ENCODE measurements at regions of chr19 and their contacts with region 1.

Region 1: DNA sequence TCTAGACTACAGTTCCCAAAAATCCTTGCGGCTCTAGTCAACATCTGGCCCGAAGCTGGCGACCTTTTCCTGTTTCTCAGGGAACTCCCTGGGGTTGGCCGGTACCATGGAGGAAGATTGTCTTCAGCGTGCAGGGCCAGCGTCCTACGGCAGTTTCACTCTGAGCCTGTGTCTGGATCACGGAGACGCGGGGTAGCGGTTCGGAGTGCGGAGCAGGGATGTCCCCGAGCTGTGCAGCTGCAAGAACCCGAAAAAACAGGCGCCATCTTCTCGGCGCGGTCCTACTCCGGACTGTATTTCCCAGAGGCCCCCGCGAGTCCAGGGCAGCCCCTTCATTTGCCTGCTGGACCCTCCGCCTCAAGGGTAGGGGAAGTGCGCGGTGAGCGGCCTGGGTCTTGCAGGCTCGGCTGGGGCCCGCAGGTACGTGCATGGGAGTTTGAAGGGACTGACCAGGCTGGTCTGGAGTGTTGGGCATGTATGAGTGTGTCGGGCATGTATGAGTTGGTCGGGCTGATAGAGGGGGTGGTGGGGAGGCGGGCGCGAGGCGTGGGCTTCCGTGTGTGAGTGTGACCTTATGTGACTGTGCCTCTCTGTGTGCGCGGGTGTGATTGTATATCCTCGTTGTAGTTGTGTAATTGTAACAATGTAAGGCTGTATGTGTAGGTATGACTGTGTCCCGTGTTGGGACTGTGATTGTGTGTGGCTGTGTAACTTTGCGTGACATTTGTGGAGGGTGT is at the start of gene ZNF383:
- DNase-seq: peak; percentile 63 to 81 (median 78)
- ATAC-seq: peak; percentile 95
- H3K4me3 ChIP-seq: peak within 1 kb of the TSS; percentile 93
- H3K4me3 Mint-ChIP-seq: peak within 1 kb of the TSS; percentile 90 to 97 (median 92)
- H3K27ac ChIP-seq: peak within 1 kb of the TSS; percentile 94
- H3K27ac Mint-ChIP-seq: peak within 1 kb of the TSS; percentile 74 to 99 (median 91)
- H3K4me1 ChIP-seq: peaks cover 0 to 6% of the 10 kb centered on the region in 2 donors
- H3K4me1 Mint-ChIP-seq: peaks cover 21 to 33% (median 31%) of the 10 kb centered on the region in 7 donors
- H3K27me3 ChIP-seq: no peaks in the 10 kb centered on the region
- H3K27me3 Mint-ChIP-seq: no peaks in the 10 kb centered on the region
- total RNA-seq, gene ZNF383: 12.2 to 33.4 (median 21.2) TPM

Region 2: GRCh38 chr19:36378625-36379509 is 839.2 kb before region 1 on chr19 and contains the start of gene ZFP14:
- CTCF ChIA-PET with region 1: no interaction called
- POLR2A ChIA-PET with region 1: interaction called, 4 read pairs
- intact Hi-C with region 1: loop called in 1 of 2 experiments (anchors 5 kb)
- DNase-seq: peak; percentile 86 to 95 (median 93)
- ATAC-seq: peak; percentile 99
- H3K4me3 ChIP-seq: peak within 1 kb of the TSS; percentile 86
- H3K4me3 Mint-ChIP-seq: peak within 1 kb of the TSS; percentile 82 to 98 (median 94)
- H3K27ac ChIP-seq: peak within 1 kb of the TSS; percentile 86
- H3K27ac Mint-ChIP-seq: peak within 1 kb of the TSS; percentile 55 to 98 (median 94)
- H3K4me1 ChIP-seq: peaks cover 0 to 10% of the 10 kb centered on the region in 2 donors
- H3K4me1 Mint-ChIP-seq: peaks cover 9 to 23% (median 21%) of the 10 kb centered on the region in 7 donors
- H3K27me3 ChIP-seq: no peaks in the 10 kb centered on the region
- H3K27me3 Mint-ChIP-seq: no peaks in the 10 kb centered on the region
- total RNA-seq, gene ZFP14: 5.3 to 24.0 (median 9.2) TPM

Region 3: DNA sequence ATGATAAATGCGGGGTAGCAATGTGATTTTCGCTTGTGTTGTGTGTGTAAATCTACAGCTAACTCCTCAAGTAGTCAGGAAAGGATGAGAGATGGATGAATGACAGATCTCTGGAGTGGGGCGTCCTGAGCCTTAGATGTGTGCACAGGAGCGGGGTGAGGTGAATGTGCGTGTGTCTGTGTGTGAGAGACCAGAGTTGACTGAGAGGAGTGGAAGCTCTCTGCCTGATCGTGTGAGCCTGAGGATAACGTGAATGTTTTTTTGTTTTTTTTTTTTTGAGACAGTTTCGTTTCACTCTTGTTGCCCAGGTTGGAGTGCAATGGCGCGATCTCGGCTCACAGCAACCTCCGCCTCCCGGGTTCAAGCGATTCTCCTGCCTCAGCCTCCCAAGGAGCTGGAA is 552.2 kb before region 1 on chr19:
- CTCF ChIA-PET with region 1: no interaction called
- POLR2A ChIA-PET with region 1: no interaction called
- intact Hi-C with region 1: loop called in 1 of 2 experiments (anchors 5 kb)
- DNase-seq: peak in 1 of 9 donors; percentile 2
- ATAC-seq: no peak
- H3K4me3 ChIP-seq: peak overlapping the region; percentile 88
- H3K4me3 Mint-ChIP-seq: peak overlapping the region; percentile 91 to 100 (median 98)
- H3K27ac ChIP-seq: no peak overlapping the region
- H3K27ac Mint-ChIP-seq: peak overlapping the region; percentile 29 to 99 (median 93)
- H3K4me1 ChIP-seq: peaks cover 0 to 10% of the 10 kb centered on the region in 2 donors
- H3K4me1 Mint-ChIP-seq: peaks cover 17 to 42% (median 35%) of the 10 kb centered on the region in 7 donors
- H3K27me3 ChIP-seq: no peaks in the 10 kb centered on the region
- H3K27me3 Mint-ChIP-seq: no peaks in the 10 kb centered on the region

Region 4: DNA sequence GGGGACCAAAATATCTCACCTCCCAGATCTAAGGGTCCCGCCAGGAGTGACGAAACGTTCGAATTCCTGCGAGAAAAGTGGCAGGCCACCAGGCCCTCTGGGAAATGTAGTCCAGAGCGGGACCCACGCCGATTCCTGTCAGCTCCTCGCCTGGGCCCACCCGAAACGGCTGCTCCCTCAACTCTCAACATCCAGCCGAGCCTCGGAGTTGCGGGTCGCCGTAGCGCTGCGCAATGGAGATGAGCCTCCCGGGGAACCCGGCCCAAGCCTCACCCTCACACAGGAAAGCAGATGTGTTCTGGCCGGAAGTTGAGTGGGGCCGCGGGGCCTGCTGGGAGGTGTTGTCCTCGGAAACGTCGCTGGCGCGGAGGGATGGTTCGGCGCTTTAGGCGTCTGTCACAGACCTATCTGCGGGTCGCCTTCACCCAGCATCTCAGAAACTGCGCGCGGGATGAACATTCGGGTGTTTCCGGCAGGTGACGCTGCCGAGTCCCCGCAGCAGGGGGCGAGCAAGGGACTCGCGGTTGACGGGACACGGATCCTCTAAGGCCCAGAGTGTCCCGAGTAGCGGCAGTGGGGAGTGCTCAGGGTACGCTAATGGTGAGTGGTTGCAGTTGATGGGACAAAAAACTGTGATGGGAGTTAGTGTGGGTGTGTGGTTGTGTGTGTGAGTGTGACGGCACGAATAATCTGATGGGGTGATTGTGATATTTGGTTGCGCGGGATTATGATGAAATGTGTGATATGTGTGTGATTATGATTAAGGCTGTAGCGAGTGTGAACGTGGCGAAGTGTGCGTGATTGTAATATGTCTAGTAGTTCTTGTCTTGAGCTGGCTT is 301.8 kb before region 1 on chr19 and contains the starts of genes ZNF568 and ZNF829:
- CTCF ChIA-PET with region 1: no interaction called
- POLR2A ChIA-PET with region 1: interaction called, 4 read pairs
- intact Hi-C with region 1: loop called (anchors 1 kb)
- DNase-seq: peak; percentile 78 to 96 (median 93)
- ATAC-seq: peak; percentile 97
- H3K4me3 ChIP-seq: peak within 1 kb of the TSS; percentile 95
- H3K4me3 Mint-ChIP-seq: peak within 1 kb of the TSS; percentile 87 to 99 (median 95)
- H3K27ac ChIP-seq: peak within 1 kb of the TSS; percentile 94
- H3K27ac Mint-ChIP-seq: peak within 1 kb of the TSS; percentile 90 to 97 (median 94)
- H3K4me1 ChIP-seq: peaks cover 8 to 13% of the 10 kb centered on the region in 2 donors
- H3K4me1 Mint-ChIP-seq: peaks cover 19 to 46% (median 29%) of the 10 kb centered on the region in 7 donors
- H3K27me3 ChIP-seq: no peaks in the 10 kb centered on the region
- H3K27me3 Mint-ChIP-seq: no peaks in the 10 kb centered on the region
- total RNA-seq, gene ZNF568: 8.2 to 18.0 (median 9.3) TPM
- total RNA-seq, gene ZNF829: 2.6 to 9.0 (median 6.3) TPM

Region 5: DNA sequence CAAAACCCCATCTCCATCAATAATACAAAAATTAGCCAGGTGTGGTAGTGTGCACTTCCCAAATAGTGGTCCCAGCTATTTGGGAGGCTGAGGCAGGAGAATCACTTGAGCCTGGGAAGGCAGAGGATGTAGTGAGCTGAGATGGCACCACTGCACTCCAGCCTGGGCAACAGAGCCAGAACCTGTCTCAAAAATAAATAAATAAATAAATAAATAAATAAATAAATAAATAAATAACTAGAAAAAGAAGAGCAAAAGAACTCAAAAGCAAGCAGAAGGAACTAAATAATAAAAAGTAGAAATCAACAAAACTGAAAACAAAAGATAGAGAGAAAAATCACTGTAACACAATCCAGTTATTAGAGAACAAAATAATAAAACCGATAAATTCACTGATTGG is 57.9 kb before region 1 on chr19:
- CTCF ChIA-PET with region 1: no interaction called
- POLR2A ChIA-PET with region 1: no interaction called
- intact Hi-C with region 1: no loop called
- DNase-seq: no peak
- ATAC-seq: no peak
- H3K4me3 ChIP-seq: no peak overlapping the region
- H3K4me3 Mint-ChIP-seq: no peak overlapping the region
- H3K27ac ChIP-seq: no peak overlapping the region
- H3K27ac Mint-ChIP-seq: no peak overlapping the region
- H3K4me1 ChIP-seq: no peaks in the 10 kb centered on the region
- H3K4me1 Mint-ChIP-seq: peaks cover 0 to 4% (median 0%) of the 10 kb centered on the region in 7 donors
- H3K27me3 ChIP-seq: no peaks in the 10 kb centered on the region
- H3K27me3 Mint-ChIP-seq: no peaks in the 10 kb centered on the region

Region 6: GRCh38 chr19:37370880-37371661 is 153.0 kb after region 1 on chr19 and contains the start of gene ZNF527:
- CTCF ChIA-PET with region 1: no interaction called
- POLR2A ChIA-PET with region 1: interaction called, 14 read pairs
- intact Hi-C with region 1: loop called (anchors 1 kb)
- DNase-seq: peak; percentile 92 to 97 (median 96)
- ATAC-seq: peak; percentile 96
- H3K4me3 ChIP-seq: peak within 1 kb of the TSS; percentile 85
- H3K4me3 Mint-ChIP-seq: peak within 1 kb of the TSS; percentile 92 to 100 (median 98)
- H3K27ac ChIP-seq: peak within 1 kb of the TSS; percentile 74
- H3K27ac Mint-ChIP-seq: peak within 1 kb of the TSS; percentile 87 to 99 (median 97)
- H3K4me1 ChIP-seq: peaks cover 0 to 8% of the 10 kb centered on the region in 2 donors
- H3K4me1 Mint-ChIP-seq: peaks cover 7 to 25% (median 17%) of the 10 kb centered on the region in 7 donors
- H3K27me3 ChIP-seq: no peaks in the 10 kb centered on the region
- H3K27me3 Mint-ChIP-seq: no peaks in the 10 kb centered on the region
- total RNA-seq, gene ZNF527: 5.6 to 13.6 (median 13.2) TPM

Region 7: DNA sequence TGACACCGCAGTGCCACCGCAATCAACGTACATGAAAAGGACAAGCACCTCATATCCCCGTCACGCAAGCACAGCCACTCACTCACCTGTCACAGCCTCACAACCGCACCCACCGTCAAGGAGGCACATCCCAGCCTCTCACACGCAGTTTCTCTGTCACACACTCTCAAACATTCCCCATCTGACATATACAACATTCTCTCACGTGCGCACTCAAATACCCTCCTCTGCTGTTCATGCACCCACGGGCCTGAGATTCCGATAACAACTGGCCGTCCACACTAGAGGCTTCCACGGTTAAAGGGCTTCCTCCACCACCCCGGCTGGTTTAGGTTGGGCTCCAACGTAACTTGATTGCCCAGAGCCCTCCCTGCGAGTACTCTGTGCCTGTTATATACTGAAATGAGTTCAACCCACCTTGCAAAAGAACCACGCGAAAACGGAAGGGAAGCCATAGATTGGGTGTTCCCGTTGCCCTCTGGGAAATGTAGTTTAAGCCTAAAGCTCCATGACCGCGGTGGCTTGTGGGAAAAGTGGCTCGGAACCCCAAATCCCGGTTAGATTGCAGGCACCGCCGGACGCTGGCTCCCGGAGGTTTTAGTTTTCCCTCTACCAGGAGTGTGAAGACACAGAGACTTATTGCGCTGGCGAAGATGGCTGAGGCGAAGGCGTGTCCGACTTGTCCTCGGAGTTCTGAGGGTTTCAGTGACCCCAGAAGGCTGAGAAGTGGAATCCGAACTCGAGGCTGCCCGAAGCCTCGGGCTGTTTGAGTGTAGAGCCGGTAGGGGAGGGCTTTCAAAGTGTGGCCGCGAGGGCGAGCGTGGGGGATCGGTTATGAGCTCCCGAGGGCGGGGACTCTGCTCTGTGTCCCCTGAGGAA is 561.3 kb after region 1 on chr19 and contains the start of gene ZNF573:
- CTCF ChIA-PET with region 1: no interaction called
- POLR2A ChIA-PET with region 1: interaction called, 3 read pairs
- intact Hi-C with region 1: loop called in 1 of 2 experiments (anchors 1 kb)
- DNase-seq: peak; percentile 62 to 99 (median 94)
- ATAC-seq: peak; percentile 94
- H3K4me3 ChIP-seq: peak within 1 kb of the TSS; percentile 82
- H3K4me3 Mint-ChIP-seq: peak within 1 kb of the TSS; percentile 91 to 98 (median 96)
- H3K27ac ChIP-seq: peak within 1 kb of the TSS; percentile 99
- H3K27ac Mint-ChIP-seq: peak within 1 kb of the TSS; percentile 89 to 100 (median 98)
- H3K4me1 ChIP-seq: peaks cover 6% of the 10 kb centered on the region in 2 donors
- H3K4me1 Mint-ChIP-seq: peaks cover 9 to 53% (median 48%) of the 10 kb centered on the region in 7 donors
- H3K27me3 ChIP-seq: no peaks in the 10 kb centered on the region
- H3K27me3 Mint-ChIP-seq: no peaks in the 10 kb centered on the region
- total RNA-seq, gene ZNF573: 5.9 to 43.8 (median 16.6) TPM